ENCODE measurements at regions of chr12 and their contacts with region 1.

Region 1: GRCh38 chr12:117836999-117837736 is 131.6 kb downstream of the KSR2 start:
- DNase-seq: peak; percentile 67
- H3K4me3 ChIP-seq: peak overlapping the region in 1 of 2 experiments; percentile 28; a peak in 1 of 4 replicates
- H3K27ac ChIP-seq: no peak overlapping the region; a peak in 1 of 4 replicates
- H3K4me1 ChIP-seq: peaks cover 0 to 29% of the 10 kb centered on the region in 2 experiments; a peak in 1 of 4 replicates
- H3K27me3 ChIP-seq: no peaks in the 10 kb centered on the region; the same call in 1 of the 2 replicates
- CTCF ChIP-seq: peak; percentile 99
- EP300 ChIP-seq: no peak
- RAD21 ChIP-seq: peak; percentile 99

Region 2: DNA sequence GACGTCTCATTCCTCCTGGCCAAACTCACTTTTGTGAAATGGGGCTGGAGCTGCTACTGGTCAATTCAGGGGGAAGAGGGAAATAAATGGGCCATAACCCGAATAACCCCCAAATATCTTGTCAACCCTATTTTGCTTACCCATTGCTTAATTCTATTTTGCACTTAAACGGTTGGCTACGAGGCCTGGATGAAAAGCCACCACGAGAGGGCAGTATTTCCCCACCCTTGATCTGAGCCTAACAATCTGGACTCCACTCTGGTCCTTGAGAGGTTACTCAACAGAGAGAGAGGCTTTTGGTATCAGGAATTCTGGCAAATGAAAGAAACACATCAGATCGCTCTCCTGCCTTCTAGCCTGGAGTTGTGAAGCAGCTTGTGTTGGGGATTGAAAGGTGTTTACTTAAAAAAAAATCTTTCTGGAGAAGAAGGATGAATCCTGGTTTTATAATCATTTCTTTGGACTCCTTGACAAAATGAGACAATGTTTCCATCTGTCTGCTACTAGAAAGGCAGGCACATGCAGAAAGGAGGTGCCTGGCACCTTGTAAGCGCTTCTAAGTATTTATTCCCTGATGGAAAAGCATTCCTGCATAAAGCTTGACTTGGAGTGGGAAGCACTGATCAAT is 624.5 kb before region 1 on chr12:
- CTCF ChIA-PET with region 1: interaction called, 73 read pairs
- POLR2A ChIA-PET with region 1: no interaction called
- DNase-seq: peak; percentile 83
- H3K4me3 ChIP-seq: peak overlapping the region in 1 of 2 experiments; percentile 35; a peak in 1 of 4 replicates
- H3K27ac ChIP-seq: no peak overlapping the region
- H3K4me1 ChIP-seq: no peaks in the 10 kb centered on the region; a peak in 1 of 4 replicates
- H3K27me3 ChIP-seq: no peaks in the 10 kb centered on the region; the same call in 1 of the 2 replicates
- CTCF ChIP-seq: peak; percentile 96
- EP300 ChIP-seq: no peak
- RAD21 ChIP-seq: peak; percentile 92

Region 3: GRCh38 chr12:117367011-117367638 is 470.0 kb before region 1 on chr12:
- CTCF ChIA-PET with region 1: interaction called, 220 read pairs
- POLR2A ChIA-PET with region 1: interaction called, 5 read pairs
- DNase-seq: peak; percentile 76
- H3K4me3 ChIP-seq: peak overlapping the region in 1 of 2 experiments; percentile 7; a peak in 1 of 4 replicates
- H3K27ac ChIP-seq: peak overlapping the region in 1 of 2 experiments; percentile 65; a peak in 2 of 4 replicates
- H3K4me1 ChIP-seq: peaks cover 0 to 53% of the 10 kb centered on the region in 2 experiments; a peak in 2 of 4 replicates
- H3K27me3 ChIP-seq: peaks cover 10% of the 10 kb centered on the region; the same call in 1 of the 2 replicates
- CTCF ChIP-seq: peak; percentile 92
- EP300 ChIP-seq: no peak
- RAD21 ChIP-seq: peak; percentile 96

Region 4: DNA sequence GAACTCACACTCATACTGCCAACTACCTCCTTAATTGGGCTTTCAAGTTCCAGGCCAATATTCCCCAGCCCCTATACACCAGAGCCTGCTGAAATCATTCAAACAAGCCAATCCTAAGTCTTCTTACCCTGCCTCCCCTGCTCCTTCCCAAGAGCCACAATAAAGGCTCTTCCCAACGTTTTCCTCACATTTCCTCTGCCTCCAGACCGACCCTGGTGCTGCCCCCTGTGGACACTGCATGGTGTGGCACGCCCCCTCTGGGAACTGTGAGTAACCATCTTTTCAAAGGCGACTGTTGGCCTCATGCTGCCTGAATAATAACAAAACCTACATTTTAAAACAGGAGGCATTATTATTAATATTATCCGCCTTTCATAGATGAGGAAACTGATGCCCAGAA is 364.2 kb before region 1 on chr12:
- CTCF ChIA-PET with region 1: interaction called, 10 read pairs
- POLR2A ChIA-PET with region 1: no interaction called
- DNase-seq: peak; percentile 67
- H3K4me3 ChIP-seq: no peak overlapping the region
- H3K27ac ChIP-seq: peak overlapping the region in 1 of 2 experiments; percentile 34; a peak in 1 of 4 replicates
- H3K4me1 ChIP-seq: peaks cover 0 to 27% of the 10 kb centered on the region in 2 experiments; a peak in 2 of 4 replicates
- H3K27me3 ChIP-seq: no peaks in the 10 kb centered on the region
- CTCF ChIP-seq: peak; percentile 56
- EP300 ChIP-seq: no peak
- RAD21 ChIP-seq: peak; percentile 58

Region 5: GRCh38 chr12:117685110-117685926 is 151.8 kb before region 1 on chr12:
- CTCF ChIA-PET with region 1: interaction called, 19 read pairs
- POLR2A ChIA-PET with region 1: interaction called, 7 read pairs
- DNase-seq: peak; percentile 84
- H3K4me3 ChIP-seq: peak overlapping the region; percentile 6 to 54; a peak in 2 of 4 replicates
- H3K27ac ChIP-seq: peak overlapping the region; percentile 94 to 97
- H3K4me1 ChIP-seq: peaks cover 32 to 44% of the 10 kb centered on the region in 2 experiments
- H3K27me3 ChIP-seq: no peaks in the 10 kb centered on the region
- CTCF ChIP-seq: no peak
- EP300 ChIP-seq: peak; percentile 86 to 96
- RAD21 ChIP-seq: peak; percentile 40

Region 6: DNA sequence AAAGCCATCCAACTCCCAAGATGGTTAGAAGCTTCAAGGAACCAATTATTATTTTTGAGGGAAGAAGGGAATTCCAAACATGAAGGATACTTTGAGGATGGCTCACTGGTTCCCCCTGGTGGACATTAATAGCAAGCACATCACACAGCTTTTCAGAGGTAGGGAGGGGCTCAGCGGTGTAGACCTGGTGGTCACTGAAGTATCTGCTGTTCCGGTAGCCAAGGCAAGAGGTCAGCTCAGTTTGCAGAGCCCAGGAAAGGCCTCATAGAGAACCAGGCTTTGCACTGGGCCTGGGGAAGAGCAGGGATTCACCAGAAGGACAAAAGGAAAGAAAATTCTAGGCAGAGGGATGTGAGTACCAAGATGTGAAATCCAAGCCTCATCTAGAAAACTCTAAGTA is 12.9 kb after region 1 on chr12:
- CTCF ChIA-PET with region 1: interaction called, 123 read pairs
- POLR2A ChIA-PET with region 1: no interaction called
- DNase-seq: peak; percentile 81
- H3K4me3 ChIP-seq: no peak overlapping the region; a peak in 1 of 4 replicates
- H3K27ac ChIP-seq: no peak overlapping the region
- H3K4me1 ChIP-seq: no peaks in the 10 kb centered on the region
- H3K27me3 ChIP-seq: no peaks in the 10 kb centered on the region
- CTCF ChIP-seq: peak; percentile 81
- EP300 ChIP-seq: no peak
- RAD21 ChIP-seq: peak; percentile 79

Measured in SK-N-SH (cell line).